HCT116 (cell line): ENCODE measurements at regions of chr11 and their contacts with region 1.

Region 1: GRCh38 chr11:93921695-93922468 is 71.5 kb upstream of the VSTM5 start:
- DNase-seq: peak; percentile 60
- ATAC-seq: peak; percentile 98
- H3K4me3 ChIP-seq: no peak overlapping the region
- H3K27ac ChIP-seq: no peak overlapping the region
- H3K4me1 ChIP-seq: no peaks in the 10 kb centered on the region
- H3K27me3 ChIP-seq: no peaks in the 10 kb centered on the region
- CTCF ChIP-seq: peak; percentile 61 to 94 (median 79)
- POLR2A ChIP-seq: no peak
- RAD21 ChIP-seq: peak; percentile 89

Region 2: DNA sequence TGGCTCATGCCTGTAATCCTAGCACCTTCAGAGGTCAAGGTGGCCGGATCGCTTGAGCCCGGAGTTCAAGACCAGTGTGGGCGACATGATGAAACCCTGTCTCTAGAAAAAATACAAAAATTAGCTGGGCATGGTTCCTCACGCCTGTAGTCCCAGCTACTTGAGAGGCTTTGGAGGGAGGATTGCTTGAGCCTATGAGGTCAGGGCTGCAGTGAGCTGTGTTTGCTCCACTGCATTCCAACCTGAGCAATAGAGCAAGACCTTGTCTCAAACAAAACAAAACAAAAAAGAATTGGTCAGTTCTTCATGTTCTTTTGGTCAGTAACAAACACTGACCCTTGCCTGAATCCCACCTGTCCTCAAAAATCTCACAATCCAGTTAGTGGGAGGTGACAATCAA is 34.8 kb before region 1 on chr11:
- CTCF ChIA-PET with region 1: no interaction called
- POLR2A ChIA-PET with region 1: no interaction called
- RAD21 ChIA-PET with region 1: no interaction called
- intact Hi-C with region 1: no loop called
- DNase-seq: no peak
- ATAC-seq: no peak
- H3K4me3 ChIP-seq: no peak overlapping the region
- H3K27ac ChIP-seq: no peak overlapping the region
- H3K4me1 ChIP-seq: no peaks in the 10 kb centered on the region
- H3K27me3 ChIP-seq: no peaks in the 10 kb centered on the region
- CTCF ChIP-seq: no peak
- POLR2A ChIP-seq: no peak
- RAD21 ChIP-seq: no peak

Region 3: DNA sequence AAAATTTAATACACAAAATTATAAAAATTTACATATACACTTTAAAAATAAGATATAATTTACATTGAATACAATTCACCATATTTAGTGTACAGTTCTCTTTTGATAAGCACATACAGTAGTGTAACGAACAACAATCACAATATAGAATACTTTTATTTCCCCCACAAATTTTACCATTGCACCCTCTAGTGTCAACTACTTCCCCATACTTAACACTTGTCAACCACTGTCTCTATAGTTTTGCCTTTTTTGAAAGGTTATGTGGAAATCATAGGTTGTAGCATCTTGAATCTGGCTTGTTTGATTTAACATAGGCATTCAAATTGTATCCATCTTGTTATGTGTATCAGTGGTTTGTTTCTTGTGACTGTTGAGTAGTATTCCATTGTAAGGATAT is 185.5 kb after region 1 on chr11:
- CTCF ChIA-PET with region 1: no interaction called
- POLR2A ChIA-PET with region 1: no interaction called
- RAD21 ChIA-PET with region 1: no interaction called
- intact Hi-C with region 1: loop called (anchors 5 kb)
- DNase-seq: no peak
- ATAC-seq: 0 out of 2 replicates have a peak, but pooled peaks have one; percentile 42
- H3K4me3 ChIP-seq: no peak overlapping the region
- H3K27ac ChIP-seq: no peak overlapping the region
- H3K4me1 ChIP-seq: no peaks in the 10 kb centered on the region
- H3K27me3 ChIP-seq: 0 out of 2 replicates have a peak, but pooled peaks cover 4% of the 10 kb centered on the region
- CTCF ChIP-seq: peak; percentile 14 to 32 (median 19); a peak in 3 of 6 replicates
- POLR2A ChIP-seq: no peak
- RAD21 ChIP-seq: peak; percentile 52